ENCODE measurements at regions of chr19 and their contacts with region 1.

Region 1: GRCh38 chr19:42325273-42325895 is at the start of gene MEGF8:
- DNase-seq: peak; percentile 97 to 98
- H3K4me3 ChIP-seq: peak within 1 kb of the TSS; percentile 60 to 78
- H3K27ac ChIP-seq: peak within 1 kb of the TSS; percentile 79
- H3K4me1 ChIP-seq: peaks cover 45% of the 10 kb centered on the region
- H3K27me3 ChIP-seq: peaks cover 14% of the 10 kb centered on the region
- CTCF ChIP-seq: peak; percentile 62 to 84 (median 65)
- POLR2A ChIP-seq: no peak
- total RNA-seq, gene MEGF8: 13.5 TPM

Region 2: GRCh38 chr19:42207767-42208271 is 117.6 kb before region 1 on chr19:
- intact Hi-C with region 1: no loop called
- DNase-seq: no peak
- H3K4me3 ChIP-seq: no peak overlapping the region
- H3K27ac ChIP-seq: peak overlapping the region; percentile 44
- H3K4me1 ChIP-seq: peaks cover 28% of the 10 kb centered on the region
- H3K27me3 ChIP-seq: no peaks in the 10 kb centered on the region
- CTCF ChIP-seq: no peak
- POLR2A ChIP-seq: no peak

Region 3: GRCh38 chr19:42370626-42371170 is 45.3 kb after region 1 on chr19:
- intact Hi-C with region 1: no loop called
- DNase-seq: no peak
- H3K4me3 ChIP-seq: no peak overlapping the region
- H3K27ac ChIP-seq: no peak overlapping the region
- H3K4me1 ChIP-seq: no peaks in the 10 kb centered on the region
- H3K27me3 ChIP-seq: no peaks in the 10 kb centered on the region
- CTCF ChIP-seq: no peak
- POLR2A ChIP-seq: no peak

Region 4: DNA sequence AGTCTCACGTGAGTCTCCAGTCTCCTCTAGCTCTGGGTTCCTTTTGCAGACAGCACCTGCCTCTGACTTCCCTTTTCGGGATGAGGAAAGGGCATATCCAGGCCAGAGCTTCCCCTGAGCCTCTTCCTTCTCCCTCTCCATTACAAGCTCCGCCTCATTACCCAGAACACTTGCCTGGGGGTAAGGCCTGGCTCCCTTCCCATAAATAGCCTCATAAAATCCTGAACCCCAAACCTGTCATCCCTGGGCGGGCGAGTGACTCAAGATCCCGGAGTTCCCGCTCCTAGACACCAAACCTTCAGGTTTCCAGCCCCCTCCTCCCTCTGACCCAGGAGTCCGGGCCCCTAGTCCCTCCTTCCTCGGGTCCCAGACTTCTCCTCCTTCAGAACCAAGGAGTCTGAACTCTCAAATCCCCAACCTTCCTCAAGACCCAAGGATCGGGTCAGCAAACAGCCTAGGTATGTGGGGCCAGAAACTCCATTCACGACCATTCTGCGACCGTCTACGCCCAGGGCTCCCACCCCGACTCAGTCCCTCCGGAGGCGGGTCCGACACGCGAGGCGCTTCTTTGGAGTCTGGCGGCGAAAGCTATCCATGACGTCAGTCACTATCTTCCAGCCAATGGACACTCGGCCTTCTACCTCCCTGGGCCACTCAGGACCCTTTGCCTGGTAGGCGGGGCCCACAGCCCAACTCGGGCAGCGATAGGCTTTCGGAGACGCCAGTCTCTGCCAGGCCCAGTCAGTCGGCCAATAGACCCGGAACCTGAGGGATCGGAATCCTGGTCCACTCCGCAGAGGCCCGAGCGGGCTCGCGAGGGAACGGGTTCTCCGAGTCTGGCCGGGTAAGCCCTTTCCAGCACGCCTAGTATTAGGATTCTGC is 71.2 kb after region 1 on chr19:
- intact Hi-C with region 1: loop called (anchors 5 kb)
- DNase-seq: peak in 1 of 2 donors; percentile 99
- H3K4me3 ChIP-seq: peak overlapping the region; percentile 50 to 58
- H3K27ac ChIP-seq: peak overlapping the region; percentile 89
- H3K4me1 ChIP-seq: peaks cover 33% of the 10 kb centered on the region
- H3K27me3 ChIP-seq: no peaks in the 10 kb centered on the region
- CTCF ChIP-seq: no peak
- POLR2A ChIP-seq: peak in 1 of 2 donors; percentile 75